Aorta (tissue), 5 donors: ENCODE measurements at regions of chr6 and their contacts with region 1.

Region 1: DNA sequence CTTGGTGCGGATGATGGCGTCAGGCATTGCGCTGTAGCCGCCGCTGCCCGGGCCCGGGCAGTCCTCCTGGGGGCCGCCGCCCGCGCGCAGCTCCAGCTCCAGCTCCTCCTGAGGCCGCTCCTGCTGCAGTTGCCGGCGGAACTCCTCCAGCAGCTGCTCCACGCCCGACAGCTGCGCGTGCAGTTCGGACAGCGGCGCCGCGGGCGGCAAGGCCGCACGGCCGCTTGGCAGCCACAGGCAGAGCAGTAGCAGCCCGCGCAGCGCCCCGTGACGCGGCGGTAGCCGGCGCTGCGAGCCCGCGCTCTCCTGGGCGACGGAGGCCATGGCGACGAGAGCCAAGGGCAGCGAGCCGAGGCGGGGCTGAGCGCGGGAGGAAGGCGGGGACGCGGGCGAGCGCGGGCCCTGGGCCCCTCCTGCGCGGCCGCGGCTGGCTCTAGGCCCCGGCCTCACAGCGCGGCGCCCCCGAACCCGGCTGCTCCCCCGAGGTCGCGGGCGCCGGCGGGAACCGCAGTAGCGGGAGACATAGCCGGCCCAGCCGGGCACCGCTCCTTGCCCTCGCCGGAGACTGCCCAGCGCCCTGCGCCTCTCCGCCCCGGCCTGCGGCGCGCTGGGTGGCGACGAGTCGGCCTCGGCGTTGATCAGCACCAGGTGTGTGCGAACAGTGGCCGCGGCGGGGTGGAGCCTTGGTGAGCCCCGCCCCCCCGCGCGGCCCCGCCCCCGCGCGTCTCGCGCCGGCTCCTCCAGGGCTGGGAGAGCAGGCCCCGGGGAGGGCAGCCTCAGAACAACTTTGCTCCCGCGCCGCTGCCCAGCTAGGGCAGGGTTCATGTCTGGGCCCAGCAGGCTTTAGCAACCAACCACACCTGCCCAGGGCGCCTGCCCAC is at the start of gene LRP11:
- DNase-seq: peak; percentile 86 to 92
- ATAC-seq: peak; percentile 95
- H3K4me3 ChIP-seq: peak within 1 kb of the TSS; percentile 74 to 82
- H3K27ac ChIP-seq: peak within 1 kb of the TSS; percentile 49 to 74
- H3K4me1 ChIP-seq: no peaks in the 10 kb centered on the region
- H3K27me3 ChIP-seq: no peaks in the 10 kb centered on the region
- total RNA-seq, gene LRP11: 24.4 to 35.3 TPM

Region 2: GRCh38 chr6:149696901-149697300 is 167.0 kb before region 1 on chr6:
- intact Hi-C with region 1: no loop called
- DNase-seq: no peak
- ATAC-seq: no peak
- H3K4me3 ChIP-seq: no peak overlapping the region
- H3K27ac ChIP-seq: no peak overlapping the region
- H3K4me1 ChIP-seq: peaks cover 0 to 4% of the 10 kb centered on the region in 2 donors
- H3K27me3 ChIP-seq: no peaks in the 10 kb centered on the region

Region 3: DNA sequence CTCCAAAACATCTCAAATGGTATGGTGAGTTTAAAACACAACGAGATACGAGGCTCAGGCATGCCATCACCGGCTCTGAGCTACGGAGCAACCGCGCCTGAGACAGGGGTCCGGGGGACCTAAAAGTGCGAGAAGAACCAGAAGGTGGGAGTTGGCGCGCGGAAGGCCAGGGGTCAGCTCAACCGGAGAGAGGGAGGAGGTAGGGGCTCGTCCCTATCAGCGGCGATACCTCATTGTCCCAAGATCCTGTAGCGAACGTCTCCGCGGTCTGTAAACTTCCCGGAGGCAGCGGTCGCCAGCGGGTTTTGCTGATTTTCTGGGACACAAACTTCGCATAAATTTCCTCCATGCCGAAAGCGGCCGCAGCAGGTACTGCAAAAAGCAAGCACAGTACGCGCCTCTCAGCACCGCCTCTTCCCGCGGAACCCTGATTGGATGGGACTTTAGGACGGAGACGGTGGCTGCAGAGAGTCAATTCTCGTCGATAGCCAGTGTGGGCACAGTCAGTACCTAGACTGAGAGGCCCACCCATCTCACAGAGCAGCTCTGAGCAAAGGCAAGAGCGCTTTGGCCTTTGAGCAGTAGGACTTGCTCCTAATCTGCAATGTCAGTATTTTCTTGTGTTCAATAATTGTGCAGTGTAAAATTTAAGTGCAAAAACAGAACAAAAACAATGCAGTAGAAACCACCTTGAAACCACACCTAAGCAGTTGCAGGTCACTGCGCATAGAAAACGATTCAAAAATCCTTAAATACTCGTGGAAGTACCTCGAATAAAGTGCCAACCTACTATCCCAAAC is 117.6 kb before region 1 on chr6 and contains the start of gene NUP43:
- intact Hi-C with region 1: loop called in 1 of 2 experiments (anchors 10 kb)
- DNase-seq: peak; percentile 97 to 98
- ATAC-seq: peak; percentile 92
- H3K4me3 ChIP-seq: peak within 1 kb of the TSS; percentile 50 to 70
- H3K27ac ChIP-seq: peak within 1 kb of the TSS in 1 of 2 donors; percentile 52
- H3K4me1 ChIP-seq: no peaks in the 10 kb centered on the region
- H3K27me3 ChIP-seq: no peaks in the 10 kb centered on the region
- total RNA-seq, gene NUP43: 28.6 to 32.1 TPM